Dorsolateral prefrontal cortex (tissue), 120 donors: ENCODE measurements at regions of chr1 and their contacts with region 1.

Region 1: GRCh38 chr1:205591522-205592351 is 40.1 kb downstream of the ELK4 start:
- DNase-seq: peak; percentile 84 to 94 (median 90)
- H3K4me3 ChIP-seq: peak overlapping the region; percentile 38 to 72 (median 58)
- H3K27ac ChIP-seq: peak overlapping the region in 52 of 59 donors; percentile 9 to 85 (median 66)
- H3K27me3 ChIP-seq: no peaks in the 10 kb centered on the region
- CTCF ChIP-seq: peak; percentile 79 to 100 (median 98)

Region 2: DNA sequence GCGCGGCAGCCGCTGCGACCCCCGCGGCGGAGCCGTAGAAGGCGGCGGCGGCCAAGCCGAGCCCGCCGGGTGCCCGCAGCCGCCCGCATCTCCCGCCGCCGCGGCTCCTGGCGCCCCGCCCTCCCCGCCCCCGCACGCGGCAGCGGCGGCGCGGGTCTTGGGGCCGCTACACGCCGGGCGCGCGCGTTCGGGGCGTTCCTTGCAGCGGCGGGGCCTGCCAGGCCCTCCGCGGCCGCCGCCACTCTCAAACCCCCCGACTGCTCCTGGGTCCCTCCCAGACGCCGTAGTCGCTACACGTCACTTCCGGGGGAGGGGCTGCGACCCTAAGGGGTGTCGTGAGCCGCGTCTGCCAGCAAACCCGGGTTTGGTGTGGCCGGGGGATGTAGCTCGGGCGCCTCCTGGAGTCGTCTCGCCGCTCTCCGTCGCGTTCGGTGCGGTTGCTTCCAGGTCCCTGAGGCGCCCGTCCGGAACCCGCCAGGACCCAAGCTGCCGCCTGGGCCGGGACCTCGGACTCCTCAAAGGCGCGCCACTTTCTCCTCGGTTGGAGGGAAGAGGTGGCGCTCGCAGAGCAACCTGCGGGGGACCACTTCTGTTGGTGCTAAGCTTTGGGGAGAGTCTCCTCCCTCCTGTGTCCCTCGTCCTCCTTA is 40.1 kb after region 1 on chr1 and contains the start of gene ELK4:
- intact Hi-C with region 1: loop called (anchors 1 to 5 kb)
- DNase-seq: peak; percentile 95 to 98 (median 97)
- H3K4me3 ChIP-seq: peak within 1 kb of the TSS; percentile 50 to 93 (median 79)
- H3K27ac ChIP-seq: peak within 1 kb of the TSS; percentile 70 to 99 (median 92)
- H3K27me3 ChIP-seq: no peaks in the 10 kb centered on the region
- CTCF ChIP-seq: peak; percentile 42 to 90 (median 82)
- total RNA-seq, gene ELK4: 27.6 to 72.4 (median 41.6) TPM

Region 3: GRCh38 chr1:205658943-205659581 is 67.3 kb after region 1 on chr1:
- intact Hi-C with region 1: loop called (anchors 1 kb)
- DNase-seq: peak; percentile 84 to 91 (median 87)
- H3K4me3 ChIP-seq: peak overlapping the region in 6 of 59 donors; percentile 0 to 25 (median 17)
- H3K27ac ChIP-seq: peak overlapping the region in 54 of 59 donors; percentile 5 to 100 (median 67)
- H3K27me3 ChIP-seq: no peaks in the 10 kb centered on the region
- CTCF ChIP-seq: peak; percentile 56 to 99 (median 95)

Region 4: DNA sequence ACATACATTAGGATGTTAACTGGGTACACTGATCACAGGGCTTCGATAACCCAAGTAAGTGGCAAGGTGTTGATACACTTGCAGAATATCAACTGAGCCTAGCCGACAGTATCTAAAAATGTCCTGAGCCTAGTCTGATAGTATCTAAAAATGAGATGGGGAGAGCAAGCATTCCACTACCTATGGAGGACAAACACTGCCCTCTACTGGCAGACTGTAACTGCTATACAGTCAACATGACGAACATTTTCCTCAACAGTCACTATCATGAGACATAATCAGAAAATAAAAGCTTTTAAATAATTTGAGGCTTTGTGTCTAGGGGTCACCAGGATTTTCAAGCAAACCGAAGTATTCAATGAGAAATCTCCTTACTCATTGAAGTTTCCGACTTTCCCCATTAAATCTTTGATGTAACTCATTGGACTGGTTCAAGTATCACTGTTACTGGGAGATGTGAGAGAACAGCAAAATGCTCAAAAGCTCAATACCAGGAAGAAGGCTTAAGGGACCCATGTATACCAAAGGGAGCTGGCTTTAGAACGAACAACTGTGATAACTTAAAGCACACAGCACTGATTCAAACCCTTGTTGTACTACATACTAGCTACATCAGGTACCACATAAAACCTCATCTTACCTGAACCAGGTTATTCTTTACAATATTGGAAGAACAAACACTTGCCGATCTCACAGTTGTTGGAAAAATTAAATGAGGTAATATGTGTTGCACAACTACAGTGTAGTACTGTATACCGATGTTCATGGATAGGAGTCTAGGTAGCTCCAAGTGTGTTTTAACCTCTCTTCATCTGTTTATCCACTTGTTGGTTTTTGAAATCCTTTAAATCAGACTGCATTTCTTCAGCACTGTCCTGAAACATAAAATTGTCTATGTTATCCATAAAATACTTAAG is 119.6 kb after region 1 on chr1:
- intact Hi-C with region 1: loop called (anchors 5 kb)
- DNase-seq: peak in 4 of 10 donors; percentile 59 to 88 (median 73)
- H3K4me3 ChIP-seq: no peak overlapping the region
- H3K27ac ChIP-seq: peak overlapping the region in 53 of 59 donors; percentile 5 to 78 (median 52)
- H3K27me3 ChIP-seq: no peaks in the 10 kb centered on the region
- CTCF ChIP-seq: peak; percentile 85 to 99 (median 93)

Region 5: DNA sequence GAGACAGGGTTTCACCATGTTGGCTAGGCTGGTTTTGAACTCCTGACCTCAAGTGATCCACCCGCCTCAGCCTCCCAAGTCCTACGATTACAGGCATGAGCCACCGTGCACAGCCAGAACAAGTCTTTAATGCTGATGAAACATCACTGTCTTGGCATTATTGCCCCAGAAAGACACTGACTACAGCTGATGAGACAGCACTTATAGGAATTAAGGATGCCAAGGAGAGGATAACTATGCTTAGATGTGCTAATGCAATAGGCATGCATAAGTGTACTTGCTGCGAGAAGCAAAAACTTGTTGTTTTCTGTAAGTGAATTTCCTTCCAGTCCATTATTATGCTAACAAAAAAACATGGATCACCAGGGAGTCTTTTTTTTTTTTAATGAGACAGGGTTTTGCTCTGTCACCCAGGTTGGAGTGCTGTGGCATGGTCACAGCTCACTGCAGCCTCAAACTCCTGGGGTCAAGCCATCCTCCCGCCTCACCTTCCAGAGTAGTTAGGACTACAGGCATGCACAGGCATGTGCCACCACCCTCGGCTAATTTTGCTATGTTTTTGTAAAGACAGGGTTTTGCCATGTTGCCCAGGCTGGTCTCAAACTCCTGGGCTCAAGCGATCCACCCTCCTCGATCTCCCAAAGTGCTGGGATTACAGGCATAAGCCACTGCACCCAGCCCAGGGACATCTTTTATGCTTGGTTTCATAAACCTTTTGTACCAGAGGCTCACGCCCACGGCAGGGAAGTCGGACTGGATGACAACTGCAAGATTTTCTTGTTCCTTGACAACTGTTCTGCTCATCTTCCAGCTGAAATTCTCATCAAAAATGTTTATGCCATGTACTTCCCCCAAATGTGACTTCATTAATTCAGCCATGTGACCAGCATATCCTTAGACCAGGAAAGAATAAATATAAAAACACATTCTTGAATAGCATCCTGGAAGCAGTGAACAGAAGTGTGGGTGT is 484.3 kb after region 1 on chr1:
- intact Hi-C with region 1: no loop called
- DNase-seq: peak in 5 of 10 donors; percentile 9 to 71 (median 50)
- H3K4me3 ChIP-seq: no peak overlapping the region
- H3K27ac ChIP-seq: peak overlapping the region in 11 of 59 donors; percentile 6 to 71 (median 28)
- H3K27me3 ChIP-seq: no peaks in the 10 kb centered on the region
- CTCF ChIP-seq: no peak